ENCODE measurements at regions of chr16 and their contacts with region 1.

Region 1: DNA sequence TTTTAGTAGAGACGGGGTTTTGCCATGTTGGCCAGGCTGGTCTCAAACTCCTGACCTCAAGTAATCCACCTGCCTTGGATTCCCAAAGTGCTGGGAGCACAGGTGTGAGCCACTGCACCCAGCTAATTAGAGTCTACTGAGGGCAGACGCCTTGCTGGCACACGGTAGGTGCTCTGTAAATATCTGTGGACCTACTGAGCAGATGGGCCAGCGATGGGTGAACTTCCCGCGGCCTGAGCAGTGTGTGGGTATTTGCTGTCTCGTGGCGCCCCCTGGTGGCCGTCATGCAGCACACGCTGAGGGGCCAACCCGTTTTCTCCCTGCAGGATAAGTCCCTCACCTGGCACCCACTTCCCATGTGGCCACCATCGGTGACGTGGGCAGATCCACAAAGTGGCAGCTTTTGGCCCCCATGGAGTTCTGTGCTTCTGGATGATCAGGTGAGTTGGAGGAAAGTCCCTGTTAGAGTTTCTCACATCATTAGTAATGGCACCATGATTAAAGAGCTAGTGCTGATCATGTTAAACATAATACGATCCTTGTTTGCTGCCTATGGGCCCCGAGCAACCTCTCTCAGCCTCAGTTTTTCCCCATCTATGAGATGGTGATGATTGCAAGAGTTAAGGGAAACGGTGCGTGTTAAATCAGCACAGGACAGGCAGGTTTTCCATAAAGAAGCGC is 40.7 kb downstream of the ZDHHC7 start:
- DNase-seq: peak; percentile 73
- ATAC-seq: peak; percentile 95
- H3K4me3 ChIP-seq: no peak overlapping the region
- H3K27ac ChIP-seq: no peak overlapping the region
- H3K4me1 ChIP-seq: peaks cover 7% of the 10 kb centered on the region
- H3K27me3 ChIP-seq: peaks cover 0 to 14% of the 10 kb centered on the region in 2 experiments; a peak in 2 of 5 replicates
- CTCF ChIP-seq: peak; percentile 99
- EP300 ChIP-seq: no peak
- POLR2A ChIP-seq: no peak
- RAD21 ChIP-seq: peak; percentile 98

Region 2: GRCh38 chr16:84754353-84754856 is 216.2 kb before region 1 on chr16:
- CTCF ChIA-PET with region 1: interaction called, 28 read pairs
- POLR2A ChIA-PET with region 1: interaction called, 3 read pairs
- in situ Hi-C with region 1: loop called (anchors 5 kb)
- intact Hi-C with region 1: loop called (anchors 1 kb)
- DNase-seq: peak; percentile 83
- ATAC-seq: peak; percentile 89
- H3K4me3 ChIP-seq: no peak overlapping the region
- H3K27ac ChIP-seq: no peak overlapping the region
- H3K4me1 ChIP-seq: peaks cover 24% of the 10 kb centered on the region
- H3K27me3 ChIP-seq: no peaks in the 10 kb centered on the region
- CTCF ChIP-seq: peak; percentile 84
- EP300 ChIP-seq: no peak
- POLR2A ChIP-seq: no peak
- RAD21 ChIP-seq: peak; percentile 79

Region 3: GRCh38 chr16:84952335-84953189 is 18.0 kb before region 1 on chr16:
- CTCF ChIA-PET with region 1: interaction called, 7 read pairs
- POLR2A ChIA-PET with region 1: no interaction called
- in situ Hi-C with region 1: no loop called
- intact Hi-C with region 1: loop called (anchors 2 kb)
- DNase-seq: peak; percentile 83
- ATAC-seq: peak; percentile 83
- H3K4me3 ChIP-seq: peak overlapping the region; percentile 17 to 71 (median 20)
- H3K27ac ChIP-seq: peak overlapping the region; percentile 15
- H3K4me1 ChIP-seq: peaks cover 59% of the 10 kb centered on the region
- H3K27me3 ChIP-seq: peaks cover 0 to 4% of the 10 kb centered on the region in 2 experiments; a peak in 2 of 5 replicates
- CTCF ChIP-seq: peak; percentile 96
- EP300 ChIP-seq: no peak
- POLR2A ChIP-seq: no peak
- RAD21 ChIP-seq: peak; percentile 75